ENCODE measurements at regions of chr2 and their contacts with region 1.

Region 1: GRCh38 chr2:169746240-169746639 is 12.6 kb downstream of the KLHL23 start:
- DNase-seq: no peak
- H3K4me3 ChIP-seq: no peak overlapping the region
- H3K4me3 Mint-ChIP-seq: no peak overlapping the region
- H3K27ac Mint-ChIP-seq: no peak overlapping the region
- H3K4me1 ChIP-seq: no peaks in the 10 kb centered on the region
- H3K4me1 Mint-ChIP-seq: no peaks in the 10 kb centered on the region
- H3K27me3 ChIP-seq: no peaks in the 10 kb centered on the region
- H3K27me3 Mint-ChIP-seq: no peaks in the 10 kb centered on the region
- CTCF ChIP-seq: no peak

Region 2: GRCh38 chr2:169585673-169586072 is 160.6 kb before region 1 on chr2:
- CTCF ChIA-PET with region 1: no interaction called
- POLR2A ChIA-PET with region 1: no interaction called
- intact Hi-C with region 1: no loop called
- DNase-seq: no peak
- H3K4me3 ChIP-seq: peak overlapping the region; percentile 86
- H3K4me3 Mint-ChIP-seq: peak overlapping the region; percentile 99
- H3K27ac Mint-ChIP-seq: peak overlapping the region; percentile 99
- H3K4me1 ChIP-seq: peaks cover 8% of the 10 kb centered on the region
- H3K4me1 Mint-ChIP-seq: peaks cover 4% of the 10 kb centered on the region
- H3K27me3 ChIP-seq: no peaks in the 10 kb centered on the region
- H3K27me3 Mint-ChIP-seq: no peaks in the 10 kb centered on the region
- CTCF ChIP-seq: no peak

Region 3: DNA sequence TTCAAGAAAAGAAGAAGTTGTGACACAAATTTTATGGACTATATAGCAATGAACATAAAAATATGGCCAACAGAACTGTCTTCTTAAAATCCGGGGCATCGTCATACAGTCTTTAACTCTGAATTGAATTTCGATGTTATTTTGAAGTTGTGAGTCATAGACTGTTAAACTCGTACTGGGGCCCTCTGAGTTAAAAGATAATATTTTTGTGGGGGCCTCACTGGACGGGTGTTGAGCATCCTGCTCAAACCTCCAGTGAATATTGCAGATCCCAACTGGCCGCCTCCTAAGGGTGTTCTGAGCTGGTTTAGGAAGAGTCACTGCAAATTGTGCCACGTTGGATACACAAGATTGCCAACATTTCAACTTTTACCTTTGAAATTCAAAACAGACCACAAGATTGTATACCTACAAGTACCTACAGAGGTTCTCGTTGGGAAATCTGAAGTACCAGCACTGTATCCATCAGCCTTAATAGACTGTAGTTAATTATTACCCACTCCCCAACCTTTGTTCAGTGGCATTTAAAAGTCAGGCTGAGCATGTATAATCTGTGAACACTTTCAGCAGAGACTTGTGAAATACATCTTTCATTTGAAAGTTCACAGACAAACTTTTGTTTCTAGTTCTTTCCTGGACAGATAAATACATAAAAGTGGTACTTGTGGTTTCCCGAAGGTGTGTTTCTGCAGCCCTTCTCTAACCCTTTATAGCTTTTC is 15.2 kb after region 1 on chr2:
- CTCF ChIA-PET with region 1: no interaction called
- POLR2A ChIA-PET with region 1: no interaction called
- intact Hi-C with region 1: loop called (anchors 2 kb)
- DNase-seq: peak in 1 of 2 experiments; percentile 61
- H3K4me3 ChIP-seq: no peak overlapping the region
- H3K4me3 Mint-ChIP-seq: peak overlapping the region; percentile 58
- H3K27ac Mint-ChIP-seq: peak overlapping the region; percentile 34
- H3K4me1 ChIP-seq: peaks cover 35% of the 10 kb centered on the region
- H3K4me1 Mint-ChIP-seq: peaks cover 30% of the 10 kb centered on the region
- H3K27me3 ChIP-seq: no peaks in the 10 kb centered on the region
- H3K27me3 Mint-ChIP-seq: no peaks in the 10 kb centered on the region
- CTCF ChIP-seq: no peak

Measured in Caco-2 (cell line).